Aorta (tissue), 5 donors: ENCODE measurements at regions of chr22 and their contacts with region 1.

Region 1: GRCh38 chr22:41596776-41597634 is 7.4 kb upstream of the PMM1 start:
- DNase-seq: peak in 1 of 2 donors; percentile 83
- ATAC-seq: peak; percentile 89
- H3K4me3 ChIP-seq: no peak overlapping the region
- H3K27ac ChIP-seq: no peak overlapping the region
- H3K4me1 ChIP-seq: no peaks in the 10 kb centered on the region
- H3K27me3 ChIP-seq: no peaks in the 10 kb centered on the region

Region 2: GRCh38 chr22:41274856-41275255 is 322.1 kb before region 1 on chr22:
- intact Hi-C with region 1: no loop called
- DNase-seq: no peak
- ATAC-seq: no peak
- H3K4me3 ChIP-seq: no peak overlapping the region
- H3K27ac ChIP-seq: no peak overlapping the region
- H3K4me1 ChIP-seq: no peaks in the 10 kb centered on the region
- H3K27me3 ChIP-seq: no peaks in the 10 kb centered on the region

Region 3: DNA sequence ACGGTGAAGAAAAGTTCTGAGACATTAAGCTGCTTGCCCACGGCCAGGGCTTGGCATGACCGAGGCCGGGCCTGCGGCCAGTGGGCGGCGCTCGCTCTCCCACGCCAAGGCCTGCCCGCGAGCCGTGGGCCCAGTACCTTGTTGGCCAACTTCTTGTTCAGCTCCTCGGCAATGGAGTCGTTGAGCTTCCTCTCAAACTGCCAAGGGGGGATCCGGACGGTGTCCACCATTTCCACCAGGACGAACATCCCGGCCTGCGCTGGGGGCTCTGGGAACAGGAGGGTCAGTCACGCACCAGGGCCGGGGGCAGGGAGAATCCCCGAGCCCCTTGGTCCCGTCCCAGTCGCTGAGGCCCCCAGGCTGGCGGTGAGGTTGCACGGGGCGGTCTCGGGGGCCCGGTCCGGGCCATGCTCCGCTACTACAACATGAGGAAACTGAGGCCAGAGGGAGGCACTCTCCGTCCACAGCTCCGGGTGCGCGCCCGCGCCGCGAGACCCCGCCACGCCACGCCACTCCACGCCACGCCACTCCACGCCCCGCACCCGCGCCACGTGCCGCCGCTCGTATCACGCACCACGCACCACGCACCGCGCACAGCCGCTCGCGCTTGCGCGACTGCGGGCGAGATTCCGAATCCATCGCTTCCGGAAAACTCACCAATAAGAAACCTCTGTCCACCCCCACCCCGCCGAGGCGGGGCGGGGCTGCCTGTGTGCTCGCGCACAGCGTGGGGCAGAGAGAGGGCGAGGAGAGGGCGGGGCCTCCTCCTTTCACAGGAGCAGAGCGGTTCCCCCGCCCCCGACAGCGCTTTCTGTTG is 52.9 kb before region 1 on chr22 and contains the start of gene POLR3H:
- intact Hi-C with region 1: loop called in 1 of 2 experiments (anchors 5 kb)
- DNase-seq: peak; percentile 99
- ATAC-seq: peak; percentile 100
- H3K4me3 ChIP-seq: peak within 1 kb of the TSS; percentile 31 to 54
- H3K27ac ChIP-seq: peak within 1 kb of the TSS in 1 of 2 donors; percentile 92
- H3K4me1 ChIP-seq: no peaks in the 10 kb centered on the region
- H3K27me3 ChIP-seq: no peaks in the 10 kb centered on the region
- total RNA-seq, gene POLR3H: 25.3 to 29.2 TPM

Region 4: GRCh38 chr22:41551877-41552582 is 45.0 kb before region 1 on chr22:
- intact Hi-C with region 1: loop called in 1 of 2 experiments (anchors 5 kb)
- DNase-seq: no peak
- ATAC-seq: no peak
- H3K4me3 ChIP-seq: no peak overlapping the region
- H3K27ac ChIP-seq: no peak overlapping the region
- H3K4me1 ChIP-seq: no peaks in the 10 kb centered on the region
- H3K27me3 ChIP-seq: no peaks in the 10 kb centered on the region

Region 5: GRCh38 chr22:41563051-41563711 is 33.8 kb before region 1 on chr22:
- intact Hi-C with region 1: loop called in 1 of 2 experiments (anchors 5 kb)
- DNase-seq: peak; percentile 70 to 83
- ATAC-seq: peak; percentile 9
- H3K4me3 ChIP-seq: no peak overlapping the region
- H3K27ac ChIP-seq: peak overlapping the region; percentile 17 to 76
- H3K4me1 ChIP-seq: no peaks in the 10 kb centered on the region
- H3K27me3 ChIP-seq: no peaks in the 10 kb centered on the region